ENCODE measurements at regions of chr11 and their contacts with region 1.

Region 1: DNA sequence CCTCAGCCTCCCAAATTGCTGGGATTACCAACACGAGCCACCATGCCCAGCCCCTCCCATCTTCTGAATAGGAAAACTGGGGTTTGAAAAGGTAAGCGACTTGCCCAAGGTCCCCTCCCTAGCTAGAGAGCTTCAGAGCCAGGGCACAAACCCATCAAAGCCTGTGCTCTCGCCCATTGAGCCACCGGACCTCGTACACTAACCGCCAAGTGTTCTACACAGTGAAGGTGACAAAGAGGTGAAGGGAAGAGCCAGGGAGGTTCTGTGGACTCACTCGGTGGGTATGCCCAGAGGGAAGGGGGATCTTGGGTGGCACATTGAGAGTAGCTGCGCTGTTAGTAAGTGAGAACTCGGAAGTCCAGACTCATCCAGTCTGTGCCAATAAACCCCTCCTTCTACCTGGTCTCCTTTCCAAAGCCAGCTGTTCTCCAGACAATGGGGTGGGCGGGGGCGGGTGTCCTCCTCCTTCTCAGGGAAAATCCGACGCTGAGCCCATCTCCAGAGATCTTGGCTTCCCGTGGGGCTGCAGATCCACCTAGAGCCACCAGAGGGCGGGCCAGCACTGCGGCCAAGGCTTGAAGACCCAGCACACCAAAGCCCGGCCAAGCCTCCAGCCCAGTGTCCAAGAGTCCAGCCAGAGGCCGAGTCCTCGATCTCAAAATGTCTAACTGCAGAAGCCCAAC is 3.2 kb upstream of the RTN4RL2 start:
- DNase-seq: peak; percentile 80 to 91
- ATAC-seq: peak; percentile 48 to 77
- H3K4me3 ChIP-seq: no peak overlapping the region
- H3K27ac ChIP-seq: peak overlapping the region; percentile 81 to 89
- H3K4me1 ChIP-seq: peaks cover 39% of the 10 kb centered on the region
- CTCF ChIP-seq: peak; percentile 86
- EP300 ChIP-seq: no peak
- POLR2A ChIP-seq: no peak
- RAD21 ChIP-seq: peak; percentile 89 to 90

Region 2: GRCh38 chr11:57303990-57304579 is 153.0 kb before region 1 on chr11:
- CTCF ChIA-PET with region 1: no interaction called
- POLR2A ChIA-PET with region 1: no interaction called
- DNase-seq: no peak
- ATAC-seq: no peak
- H3K4me3 ChIP-seq: no peak overlapping the region
- H3K27ac ChIP-seq: peak overlapping the region in 1 of 2 experiments; percentile 0; a peak in 1 of 6 replicates
- H3K4me1 ChIP-seq: peaks cover 32% of the 10 kb centered on the region
- CTCF ChIP-seq: no peak
- EP300 ChIP-seq: no peak
- POLR2A ChIP-seq: no peak
- RAD21 ChIP-seq: no peak

Region 3: DNA sequence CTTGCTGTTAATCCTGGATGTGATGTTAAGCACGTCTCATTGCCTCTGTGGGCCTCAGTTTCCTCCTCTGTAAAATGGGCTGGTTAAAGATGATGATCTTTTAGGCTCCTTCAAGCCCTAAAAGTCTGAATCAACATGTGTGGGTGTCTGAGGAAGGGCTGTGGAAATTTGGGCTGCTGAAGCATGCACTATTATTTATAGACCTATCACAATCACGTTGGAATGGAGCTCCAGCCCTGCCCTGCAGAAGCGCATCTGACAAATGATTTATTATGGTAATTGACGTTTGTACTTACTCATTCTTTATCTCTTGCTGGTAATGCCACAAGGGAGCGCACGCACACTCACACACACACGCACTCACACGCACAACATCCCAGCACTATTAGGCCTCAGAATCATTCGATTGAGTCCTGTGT is 98.5 kb before region 1 on chr11:
- CTCF ChIA-PET with region 1: interaction called, 33 read pairs
- POLR2A ChIA-PET with region 1: interaction called, 3 read pairs
- DNase-seq: peak in 1 of 2 experiments; percentile 84
- ATAC-seq: peak; percentile 52 to 71
- H3K4me3 ChIP-seq: no peak overlapping the region
- H3K27ac ChIP-seq: peak overlapping the region; percentile 84 to 88
- H3K4me1 ChIP-seq: peaks cover 38% of the 10 kb centered on the region
- CTCF ChIP-seq: no peak; the same call in 1 of the 3 replicates
- EP300 ChIP-seq: peak; percentile 40 to 51; a peak in 2 of 5 replicates
- POLR2A ChIP-seq: no peak
- RAD21 ChIP-seq: no peak

Region 4: GRCh38 chr11:57417056-57417455 is 40.0 kb before region 1 on chr11:
- CTCF ChIA-PET with region 1: interaction called, 13 read pairs
- POLR2A ChIA-PET with region 1: no interaction called
- DNase-seq: no peak
- ATAC-seq: no peak
- H3K4me3 ChIP-seq: no peak overlapping the region
- H3K27ac ChIP-seq: no peak overlapping the region
- H3K4me1 ChIP-seq: no peaks in the 10 kb centered on the region
- CTCF ChIP-seq: no peak
- EP300 ChIP-seq: no peak
- POLR2A ChIP-seq: no peak
- RAD21 ChIP-seq: no peak

Region 5: GRCh38 chr11:57444362-57445121 is 12.6 kb before region 1 on chr11:
- CTCF ChIA-PET with region 1: interaction called, 121 read pairs
- POLR2A ChIA-PET with region 1: interaction called, 5 read pairs
- DNase-seq: peak; percentile 61 to 93
- ATAC-seq: peak; percentile 84 to 87
- H3K4me3 ChIP-seq: no peak overlapping the region
- H3K27ac ChIP-seq: peak overlapping the region; percentile 80 to 85
- H3K4me1 ChIP-seq: peaks cover 54% of the 10 kb centered on the region
- CTCF ChIP-seq: no peak
- EP300 ChIP-seq: peak; percentile 78 to 85; a peak in 3 of 5 replicates
- POLR2A ChIP-seq: no peak
- RAD21 ChIP-seq: peak in 1 of 2 experiments; percentile 9; a peak in 2 of 5 replicates

Region 6: GRCh38 chr11:57493507-57494503 is 36.7 kb after region 1 on chr11:
- CTCF ChIA-PET with region 1: interaction called, 41 read pairs
- POLR2A ChIA-PET with region 1: no interaction called
- DNase-seq: peak in 1 of 2 experiments; percentile 73
- ATAC-seq: peak; percentile 28 to 84; a peak in 3 of 6 replicates
- H3K4me3 ChIP-seq: no peak overlapping the region
- H3K27ac ChIP-seq: peak overlapping the region; percentile 78 to 86
- H3K4me1 ChIP-seq: peaks cover 7% of the 10 kb centered on the region
- CTCF ChIP-seq: peak; percentile 71
- EP300 ChIP-seq: no peak
- POLR2A ChIP-seq: no peak
- RAD21 ChIP-seq: peak; percentile 59 to 66

Region 7: DNA sequence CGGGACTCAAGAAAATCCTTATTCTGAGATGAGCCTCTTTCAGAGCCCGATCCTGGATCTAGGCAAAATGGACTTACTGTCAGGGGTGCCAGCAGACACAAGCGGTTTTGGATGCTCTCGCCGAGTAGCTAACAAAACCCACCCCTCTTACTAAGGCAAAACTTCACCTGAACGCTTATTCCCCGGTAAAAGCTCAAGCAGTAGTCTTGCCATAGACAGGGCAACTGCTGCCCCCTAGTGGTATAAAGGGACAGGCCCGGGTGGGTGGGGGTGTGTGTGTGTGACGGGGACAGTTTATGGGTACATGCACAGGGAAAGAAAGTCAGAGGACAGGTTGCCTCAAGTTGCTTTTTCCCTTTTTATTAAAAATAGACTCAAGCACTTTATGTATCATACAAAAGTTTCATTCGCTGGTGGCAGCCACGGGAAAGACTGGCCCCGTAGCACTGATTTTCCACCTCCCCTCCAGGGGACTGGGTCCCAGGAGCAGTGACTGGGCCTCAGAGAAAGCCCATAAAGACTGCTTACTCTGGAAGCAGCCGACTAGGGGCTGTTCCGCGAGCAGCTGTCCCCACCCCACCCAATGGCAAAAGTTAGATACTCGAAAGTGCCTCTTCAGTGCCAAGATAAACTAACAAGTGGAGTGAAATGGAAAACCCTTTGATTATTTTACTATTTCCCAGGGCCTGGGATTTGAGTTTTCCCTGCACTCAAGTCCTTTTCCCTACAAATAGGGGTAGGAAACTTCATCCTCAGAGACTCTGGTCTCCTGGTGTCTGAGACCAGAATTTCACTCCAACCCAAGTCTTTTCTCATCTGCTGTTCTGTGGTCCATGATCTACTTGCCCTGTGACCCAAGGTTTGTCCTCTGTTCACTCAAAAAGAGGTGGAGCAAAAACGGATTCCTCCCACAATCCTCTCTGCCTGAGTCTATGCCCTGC is 187.9 kb after region 1 on chr11:
- CTCF ChIA-PET with region 1: interaction called, 87 read pairs
- POLR2A ChIA-PET with region 1: no interaction called
- DNase-seq: peak; percentile 76 to 85
- ATAC-seq: peak; percentile 60 to 76; a peak in 5 of 6 replicates
- H3K4me3 ChIP-seq: no peak overlapping the region
- H3K27ac ChIP-seq: no peak overlapping the region
- H3K4me1 ChIP-seq: peaks cover 32% of the 10 kb centered on the region
- CTCF ChIP-seq: peak; percentile 88
- EP300 ChIP-seq: no peak
- POLR2A ChIP-seq: no peak
- RAD21 ChIP-seq: peak; percentile 74 to 76